ENCODE measurements at regions of chr13 and their contacts with region 1.

Region 1: DNA sequence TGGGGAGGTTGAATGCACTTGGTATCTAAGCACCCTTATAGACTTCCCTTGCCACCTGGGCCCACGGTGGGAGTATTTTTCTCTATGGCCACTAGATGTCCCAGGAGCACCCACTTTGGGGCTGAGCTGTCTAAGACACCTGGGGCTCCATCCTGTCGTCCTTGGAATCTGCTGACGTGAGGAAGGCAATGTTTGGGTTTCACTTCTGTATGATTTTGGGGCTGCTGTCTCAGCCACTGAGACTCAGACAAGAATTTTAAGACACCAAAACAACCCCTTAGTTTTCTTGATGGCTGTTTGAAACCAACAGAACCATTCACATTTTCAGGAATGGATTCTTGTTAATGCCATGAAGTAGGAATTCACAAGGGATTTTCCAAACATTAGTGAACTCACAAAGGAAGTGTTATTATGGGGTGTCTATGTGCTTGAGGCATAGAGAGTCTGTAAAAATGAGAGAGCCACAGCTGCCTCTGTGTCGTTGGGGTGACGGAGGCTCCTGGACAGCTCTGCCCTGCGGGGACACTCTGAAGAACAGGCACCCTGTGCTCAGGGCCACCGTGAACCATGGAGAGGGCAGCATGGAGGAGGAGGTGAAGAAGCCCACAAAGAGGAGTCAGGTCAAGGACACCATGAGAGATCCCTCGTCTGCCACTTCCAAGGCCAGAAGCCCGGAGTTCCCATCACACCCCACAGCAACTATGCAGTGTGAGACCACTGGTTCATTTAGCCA is 106.8 kb upstream of the SPATA13 start:
- DNase-seq: peak; percentile 85
- H3K4me3 Mint-ChIP-seq: no peak overlapping the region
- H3K27ac Mint-ChIP-seq: no peak overlapping the region
- H3K4me1 Mint-ChIP-seq: peaks cover 20% of the 10 kb centered on the region
- H3K27me3 Mint-ChIP-seq: no peaks in the 10 kb centered on the region
- CTCF ChIP-seq: peak; percentile 65

Region 2: DNA sequence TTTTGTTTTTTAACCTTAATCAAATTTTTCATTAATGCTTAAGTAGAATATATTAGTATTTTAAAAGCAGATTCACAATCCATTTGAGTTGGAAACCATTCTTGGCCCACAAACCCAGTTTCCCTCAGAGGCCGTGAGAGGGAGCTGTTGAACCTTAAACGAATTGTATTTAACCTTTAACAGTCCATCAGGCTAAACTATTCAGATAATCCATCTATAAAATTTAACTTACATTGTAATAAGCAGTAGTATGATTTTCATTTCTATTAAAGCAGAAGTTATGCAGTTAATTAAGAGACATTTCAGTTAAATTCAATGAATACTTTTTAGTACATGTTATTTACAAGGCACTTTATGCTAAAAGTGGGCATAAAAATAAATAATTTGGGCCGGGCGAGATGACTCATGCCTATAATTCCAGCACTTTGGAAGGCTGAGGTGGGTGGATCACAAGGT is 33.3 kb before region 1 on chr13:
- CTCF ChIA-PET with region 1: interaction called, 17 read pairs
- POLR2A ChIA-PET with region 1: no interaction called
- intact Hi-C with region 1: loop called (anchors 1 kb)
- DNase-seq: peak; percentile 73
- H3K4me3 Mint-ChIP-seq: no peak overlapping the region
- H3K27ac Mint-ChIP-seq: no peak overlapping the region
- H3K4me1 Mint-ChIP-seq: no peaks in the 10 kb centered on the region
- H3K27me3 Mint-ChIP-seq: no peaks in the 10 kb centered on the region
- CTCF ChIP-seq: peak; percentile 57

Region 3: GRCh38 chr13:24148399-24149305 is 95.0 kb after region 1 on chr13:
- CTCF ChIA-PET with region 1: no interaction called
- POLR2A ChIA-PET with region 1: no interaction called
- intact Hi-C with region 1: loop called (anchors 5 kb)
- DNase-seq: peak; percentile 86
- H3K4me3 Mint-ChIP-seq: peak overlapping the region; percentile 9
- H3K27ac Mint-ChIP-seq: peak overlapping the region; percentile 86
- H3K4me1 Mint-ChIP-seq: peaks cover 15% of the 10 kb centered on the region
- H3K27me3 Mint-ChIP-seq: no peaks in the 10 kb centered on the region
- CTCF ChIP-seq: no peak

Region 4: GRCh38 chr13:24160454-24161009 is 106.8 kb after region 1 on chr13 and contains the start of gene SPATA13:
- CTCF ChIA-PET with region 1: no interaction called
- POLR2A ChIA-PET with region 1: interaction called, 3 read pairs
- intact Hi-C with region 1: loop called (anchors 1 kb)
- DNase-seq: peak; percentile 90
- H3K4me3 Mint-ChIP-seq: peak within 1 kb of the TSS; percentile 80
- H3K27ac Mint-ChIP-seq: peak within 1 kb of the TSS; percentile 39
- H3K4me1 Mint-ChIP-seq: peaks cover 10% of the 10 kb centered on the region
- H3K27me3 Mint-ChIP-seq: no peaks in the 10 kb centered on the region
- CTCF ChIP-seq: no peak
- total RNA-seq, gene SPATA13: 2.2 TPM in 2 replicates

Region 5: GRCh38 chr13:24220086-24220703 is 166.5 kb after region 1 on chr13:
- CTCF ChIA-PET with region 1: interaction called, 36 read pairs
- POLR2A ChIA-PET with region 1: no interaction called
- intact Hi-C with region 1: loop called (anchors 1 kb)
- DNase-seq: peak; percentile 82
- H3K4me3 Mint-ChIP-seq: no peak overlapping the region
- H3K27ac Mint-ChIP-seq: no peak overlapping the region
- H3K4me1 Mint-ChIP-seq: no peaks in the 10 kb centered on the region
- H3K27me3 Mint-ChIP-seq: no peaks in the 10 kb centered on the region
- CTCF ChIP-seq: peak; percentile 66